CD4-positive, alpha-beta T cell (primary cell): ENCODE measurements at regions of chr15 and their contacts with region 1.

Region 1: GRCh38 chr15:91844928-91845327 is 8.6 kb upstream of the SLCO3A1 start:
- DNase-seq: no peak
- ATAC-seq: no peak
- H3K4me3 ChIP-seq: no peak overlapping the region
- H3K4me3 Mint-ChIP-seq: no peak overlapping the region
- H3K27ac ChIP-seq: no peak overlapping the region
- H3K27ac Mint-ChIP-seq: no peak overlapping the region
- H3K4me1 ChIP-seq: peaks cover 5% of the 10 kb centered on the region
- H3K4me1 Mint-ChIP-seq: peaks cover 12% of the 10 kb centered on the region
- H3K27me3 ChIP-seq: peaks cover 0 to under 1% of the 10 kb centered on the region in 2 experiments
- H3K27me3 Mint-ChIP-seq: peaks cover 52% of the 10 kb centered on the region
- CTCF ChIP-seq: no peak

Region 2: DNA sequence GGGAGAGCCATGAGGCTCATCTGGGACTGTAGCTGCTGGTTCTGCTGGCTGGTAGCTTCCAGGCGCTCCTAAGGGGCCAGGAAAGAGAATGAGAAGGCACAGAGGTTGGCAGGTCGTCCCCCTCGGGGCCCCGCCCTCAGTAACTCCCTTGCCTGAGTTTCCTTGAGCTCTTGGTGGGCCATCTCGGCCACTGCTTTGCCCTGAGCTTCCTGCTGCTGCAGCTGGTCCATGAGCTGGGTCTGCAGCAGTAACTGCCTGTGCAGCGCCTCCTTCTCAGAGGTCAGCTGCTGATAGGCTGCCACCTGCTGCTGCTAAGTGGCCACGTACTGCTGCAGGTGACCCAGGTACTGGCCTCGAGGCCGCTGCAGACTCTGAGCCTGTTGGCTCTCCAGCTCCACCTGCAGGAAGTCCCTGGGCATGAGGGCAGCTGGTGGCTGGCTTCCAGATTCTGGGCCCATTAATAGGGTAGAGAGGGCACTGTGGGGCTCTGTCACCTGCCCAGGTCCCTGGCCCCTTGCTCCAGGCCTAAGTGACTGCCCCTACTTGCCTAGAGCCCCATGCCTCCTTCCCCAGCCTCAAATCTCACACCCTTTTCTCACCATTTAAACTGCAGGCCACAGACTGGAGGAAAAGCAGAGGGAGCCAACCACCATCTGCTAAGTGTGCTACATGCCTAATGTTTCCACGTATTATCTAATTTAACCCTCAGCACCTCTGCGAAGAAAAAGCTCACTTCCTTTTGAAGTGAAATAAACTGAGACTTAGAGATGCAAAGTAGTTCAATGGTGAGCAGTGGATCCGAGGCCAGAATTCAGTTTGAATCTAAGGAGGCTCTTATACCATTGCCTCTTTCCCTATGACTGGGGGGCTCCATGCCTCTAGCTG is 811.8 kb before region 1 on chr15:
- CTCF ChIA-PET with region 1: no interaction called
- POLR2A ChIA-PET with region 1: no interaction called
- intact Hi-C with region 1: loop called in 1 of 2 experiments (anchors 5 kb)
- DNase-seq: peak; percentile 26 to 74 (median 52)
- ATAC-seq: peak; percentile 64
- H3K4me3 ChIP-seq: no peak overlapping the region
- H3K4me3 Mint-ChIP-seq: no peak overlapping the region
- H3K27ac ChIP-seq: no peak overlapping the region
- H3K27ac Mint-ChIP-seq: no peak overlapping the region
- H3K4me1 ChIP-seq: peaks cover 6% of the 10 kb centered on the region
- H3K4me1 Mint-ChIP-seq: no peaks in the 10 kb centered on the region
- H3K27me3 ChIP-seq: peaks cover 0 to 4% of the 10 kb centered on the region in 2 experiments
- H3K27me3 Mint-ChIP-seq: no peaks in the 10 kb centered on the region
- CTCF ChIP-seq: peak; percentile 73